IMR-90 (cell line): ENCODE measurements at regions of chr9 and their contacts with region 1.

Region 1: DNA sequence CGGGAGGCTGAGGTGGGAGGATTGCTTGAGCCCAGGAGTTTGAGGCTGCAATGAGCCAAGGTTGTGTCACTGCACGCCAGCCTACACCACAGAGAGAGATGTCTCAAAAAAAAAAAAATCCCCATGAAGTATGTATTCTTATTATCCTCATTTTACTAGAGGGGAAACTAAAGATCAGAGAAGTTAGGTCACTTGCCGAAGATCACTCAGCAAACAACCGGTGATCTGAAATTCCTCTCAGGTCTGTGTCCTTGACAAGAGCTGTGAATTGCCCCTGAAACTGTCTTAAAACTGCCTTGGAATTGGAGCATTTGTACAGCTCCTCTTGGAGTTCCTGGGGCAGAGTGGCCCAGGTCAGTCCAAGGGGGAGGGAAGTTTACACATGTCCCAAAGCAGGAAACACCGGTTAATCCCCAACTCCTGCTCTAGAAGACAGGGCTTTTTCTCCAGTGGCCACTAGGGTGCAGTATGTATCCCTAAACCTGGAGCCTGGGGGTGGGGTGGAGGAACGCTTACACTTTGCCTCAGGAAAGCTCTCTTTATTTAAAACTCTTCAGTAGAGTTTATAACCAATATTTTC is 27.6 kb downstream of the AQP7 start:
- DNase-seq: peak; percentile 74
- ATAC-seq: peak; percentile 94
- H3K4me3 ChIP-seq: no peak overlapping the region
- H3K27ac ChIP-seq: no peak overlapping the region
- H3K4me1 ChIP-seq: 0 out of 2 replicates have a peak, but pooled peaks cover 2% of the 10 kb centered on the region
- H3K27me3 ChIP-seq: no peaks in the 10 kb centered on the region
- CTCF ChIP-seq: peak; percentile 89
- POLR2A ChIP-seq: no peak
- RAD21 ChIP-seq: peak; percentile 86

Region 2: GRCh38 chr9:32395490-32396216 is 979.1 kb before region 1 on chr9:
- CTCF ChIA-PET with region 1: no interaction called
- POLR2A ChIA-PET with region 1: no interaction called
- dilution Hi-C with region 1: no loop called
- in situ Hi-C with region 1: no loop called
- intact Hi-C with region 1: no loop called
- DNase-seq: peak; percentile 98
- ATAC-seq: peak; percentile 87
- H3K4me3 ChIP-seq: no peak overlapping the region
- H3K27ac ChIP-seq: peak overlapping the region; percentile 100
- H3K4me1 ChIP-seq: peaks cover 36% of the 10 kb centered on the region
- H3K27me3 ChIP-seq: no peaks in the 10 kb centered on the region
- CTCF ChIP-seq: peak; percentile 47
- POLR2A ChIP-seq: no peak
- RAD21 ChIP-seq: peak; percentile 40

Region 3: GRCh38 chr9:33404788-33405362 is 30.2 kb after region 1 on chr9:
- CTCF ChIA-PET with region 1: no interaction called
- POLR2A ChIA-PET with region 1: no interaction called
- dilution Hi-C with region 1: no loop called
- in situ Hi-C with region 1: no loop called
- intact Hi-C with region 1: no loop called
- DNase-seq: no peak
- ATAC-seq: peak; percentile 27; the same call in 1 of the 2 replicates
- H3K4me3 ChIP-seq: no peak overlapping the region
- H3K27ac ChIP-seq: no peak overlapping the region
- H3K4me1 ChIP-seq: no peaks in the 10 kb centered on the region
- H3K27me3 ChIP-seq: peaks cover 3% of the 10 kb centered on the region; the same call in 1 of the 2 replicates
- CTCF ChIP-seq: no peak
- POLR2A ChIP-seq: no peak
- RAD21 ChIP-seq: no peak

Region 4: DNA sequence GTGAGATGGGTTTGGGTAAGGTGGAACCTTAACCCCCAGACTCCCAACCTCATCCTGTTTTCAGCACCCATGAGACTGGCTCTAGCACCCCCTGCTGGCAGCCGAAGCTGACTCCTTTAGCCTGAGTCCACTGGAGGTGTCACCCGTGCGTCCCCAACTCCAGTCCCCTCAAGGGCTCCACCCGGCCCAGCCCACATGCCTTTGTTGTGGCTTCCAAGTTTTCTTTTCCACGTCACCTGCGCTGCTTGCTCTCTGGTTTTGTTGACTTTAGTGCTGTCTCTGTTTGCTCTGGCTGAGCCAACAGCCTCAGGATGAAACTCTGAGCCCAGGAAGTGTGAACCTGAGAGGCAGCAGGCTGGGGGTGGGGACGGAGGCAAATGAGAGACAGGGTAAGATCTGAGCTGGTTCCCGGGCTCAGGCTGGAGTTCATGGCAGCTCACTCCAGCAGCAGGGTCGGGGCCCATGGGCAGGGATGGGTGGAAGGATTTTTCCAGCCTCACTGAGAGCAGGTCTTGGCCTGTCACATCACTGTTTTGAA is 40.8 kb after region 1 on chr9:
- CTCF ChIA-PET with region 1: interaction called, 14 read pairs
- POLR2A ChIA-PET with region 1: no interaction called
- dilution Hi-C with region 1: no loop called
- in situ Hi-C with region 1: no loop called
- intact Hi-C with region 1: loop called (anchors 1 kb)
- DNase-seq: peak; percentile 22
- ATAC-seq: peak; percentile 91
- H3K4me3 ChIP-seq: no peak overlapping the region
- H3K27ac ChIP-seq: no peak overlapping the region
- H3K4me1 ChIP-seq: no peaks in the 10 kb centered on the region
- H3K27me3 ChIP-seq: peaks cover 16% of the 10 kb centered on the region
- CTCF ChIP-seq: peak; percentile 67
- POLR2A ChIP-seq: no peak
- RAD21 ChIP-seq: peak; percentile 58

Region 5: GRCh38 chr9:33452828-33453271 is 78.1 kb after region 1 on chr9:
- CTCF ChIA-PET with region 1: interaction called, 8 read pairs
- POLR2A ChIA-PET with region 1: no interaction called
- dilution Hi-C with region 1: no loop called
- in situ Hi-C with region 1: no loop called
- intact Hi-C with region 1: loop called (anchors 1 kb)
- DNase-seq: peak; percentile 84
- ATAC-seq: peak; percentile 97
- H3K4me3 ChIP-seq: no peak overlapping the region
- H3K27ac ChIP-seq: no peak overlapping the region; the same call in 1 of the 2 replicates
- H3K4me1 ChIP-seq: peaks cover 3% of the 10 kb centered on the region
- H3K27me3 ChIP-seq: no peaks in the 10 kb centered on the region
- CTCF ChIP-seq: peak; percentile 86
- POLR2A ChIP-seq: no peak
- RAD21 ChIP-seq: peak; percentile 62

Region 6: GRCh38 chr9:33466565-33467495 is 92.1 kb after region 1 on chr9:
- CTCF ChIA-PET with region 1: no interaction called
- POLR2A ChIA-PET with region 1: no interaction called
- dilution Hi-C with region 1: no loop called
- in situ Hi-C with region 1: loop called (anchors 5 kb)
- intact Hi-C with region 1: loop called (anchors 1 kb)
- DNase-seq: peak; percentile 24
- ATAC-seq: peak; percentile 91
- H3K4me3 ChIP-seq: no peak overlapping the region
- H3K27ac ChIP-seq: no peak overlapping the region
- H3K4me1 ChIP-seq: no peaks in the 10 kb centered on the region
- H3K27me3 ChIP-seq: no peaks in the 10 kb centered on the region
- CTCF ChIP-seq: peak; percentile 84
- POLR2A ChIP-seq: no peak
- RAD21 ChIP-seq: peak; percentile 84

Region 7: DNA sequence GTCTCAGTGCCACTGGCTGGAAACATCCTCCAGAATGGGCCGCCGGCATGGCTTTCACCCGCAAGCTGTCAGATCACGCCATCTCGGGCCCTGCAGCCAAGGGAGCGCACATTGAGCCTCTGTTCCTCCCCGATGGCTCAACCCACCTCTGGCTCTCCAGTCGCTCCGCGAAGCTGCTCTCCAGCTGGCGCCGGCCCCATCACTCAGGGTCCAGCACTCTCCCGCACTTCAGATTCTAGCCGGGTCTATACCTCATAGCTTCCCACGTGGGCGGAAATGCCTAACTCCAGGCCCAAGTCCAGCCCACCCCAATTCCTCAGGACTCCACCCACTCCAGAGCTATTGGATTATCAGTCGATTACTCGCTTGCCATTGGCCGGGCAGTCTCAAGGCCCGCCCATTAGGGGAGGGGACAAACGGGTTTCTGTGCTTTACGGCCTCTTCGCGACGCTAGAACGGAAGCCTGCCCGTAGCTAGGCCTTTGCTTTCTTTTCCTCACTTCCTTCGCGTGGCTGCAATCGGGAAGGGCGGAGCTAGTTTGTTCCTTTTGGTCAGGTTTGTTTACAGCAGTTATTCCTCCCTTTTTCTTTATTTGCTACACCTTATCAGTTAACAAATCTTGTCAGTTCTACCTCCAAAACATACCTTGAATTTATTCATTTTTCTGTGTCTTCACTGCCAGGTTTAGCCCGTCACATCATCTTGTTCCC is 99.1 kb after region 1 on chr9 and contains the start of gene NOL6:
- CTCF ChIA-PET with region 1: interaction called, 10 read pairs
- POLR2A ChIA-PET with region 1: no interaction called
- dilution Hi-C with region 1: no loop called
- in situ Hi-C with region 1: loop called (anchors 5 kb)
- intact Hi-C with region 1: no loop called
- DNase-seq: peak; percentile 99
- ATAC-seq: peak; percentile 99
- H3K4me3 ChIP-seq: peak within 1 kb of the TSS; percentile 57
- H3K27ac ChIP-seq: peak within 1 kb of the TSS; percentile 57
- H3K4me1 ChIP-seq: peaks cover 3% of the 10 kb centered on the region; the same call in 1 of the 2 replicates
- H3K27me3 ChIP-seq: no peaks in the 10 kb centered on the region
- CTCF ChIP-seq: no peak
- POLR2A ChIP-seq: peak; percentile 95
- RAD21 ChIP-seq: no peak
- total RNA-seq, gene NOL6: 42.8 and 47.3 TPM in 2 replicates

Region 8: DNA sequence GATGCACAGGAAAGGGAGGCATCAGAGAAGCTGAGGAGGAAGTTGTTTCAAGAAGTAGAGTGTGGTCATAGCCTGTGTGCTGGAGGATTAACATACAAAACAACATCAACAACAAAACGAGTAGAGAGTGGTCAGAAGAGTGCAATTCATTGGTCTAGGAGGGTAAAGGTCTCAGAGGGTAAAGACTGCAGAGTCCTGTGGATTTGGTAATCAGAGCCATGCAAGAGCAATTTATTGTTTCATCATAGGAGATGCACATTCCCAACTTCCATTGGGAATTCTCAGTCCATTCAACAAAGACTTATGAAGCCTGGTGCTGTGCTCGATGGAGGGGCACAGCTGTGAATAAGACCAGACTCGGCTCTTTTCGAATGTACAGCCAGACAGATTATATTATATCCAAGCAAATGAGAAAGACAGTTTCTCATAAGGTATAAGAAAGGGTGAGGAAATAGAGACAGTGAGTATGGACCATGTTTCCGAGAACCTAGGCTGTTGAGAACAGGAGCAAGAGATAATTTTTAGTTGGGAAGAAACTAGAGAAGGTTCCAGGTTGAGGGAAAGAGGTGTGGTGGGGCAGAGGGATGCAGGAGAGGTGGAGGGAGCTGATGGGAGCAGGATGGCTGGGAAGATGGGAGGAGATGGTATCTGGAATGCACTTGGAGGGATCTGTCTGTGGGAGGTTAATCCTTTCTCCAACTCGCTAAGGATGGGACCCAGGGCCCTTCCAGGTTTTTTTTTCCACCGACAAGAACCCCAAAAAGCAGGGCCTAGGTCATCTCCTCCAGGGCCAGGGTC is 1009.8 kb after region 1 on chr9:
- CTCF ChIA-PET with region 1: no interaction called
- POLR2A ChIA-PET with region 1: no interaction called
- dilution Hi-C with region 1: no loop called
- in situ Hi-C with region 1: no loop called
- intact Hi-C with region 1: no loop called
- DNase-seq: no peak
- ATAC-seq: no peak
- H3K4me3 ChIP-seq: no peak overlapping the region
- H3K27ac ChIP-seq: no peak overlapping the region
- H3K4me1 ChIP-seq: peaks cover 6% of the 10 kb centered on the region
- H3K27me3 ChIP-seq: peaks cover 1% of the 10 kb centered on the region; the same call in 1 of the 2 replicates
- CTCF ChIP-seq: no peak
- POLR2A ChIP-seq: no peak
- RAD21 ChIP-seq: no peak